Aorta (tissue), 5 donors: ENCODE measurements at regions of chr12 and their contacts with region 1.

Region 1: DNA sequence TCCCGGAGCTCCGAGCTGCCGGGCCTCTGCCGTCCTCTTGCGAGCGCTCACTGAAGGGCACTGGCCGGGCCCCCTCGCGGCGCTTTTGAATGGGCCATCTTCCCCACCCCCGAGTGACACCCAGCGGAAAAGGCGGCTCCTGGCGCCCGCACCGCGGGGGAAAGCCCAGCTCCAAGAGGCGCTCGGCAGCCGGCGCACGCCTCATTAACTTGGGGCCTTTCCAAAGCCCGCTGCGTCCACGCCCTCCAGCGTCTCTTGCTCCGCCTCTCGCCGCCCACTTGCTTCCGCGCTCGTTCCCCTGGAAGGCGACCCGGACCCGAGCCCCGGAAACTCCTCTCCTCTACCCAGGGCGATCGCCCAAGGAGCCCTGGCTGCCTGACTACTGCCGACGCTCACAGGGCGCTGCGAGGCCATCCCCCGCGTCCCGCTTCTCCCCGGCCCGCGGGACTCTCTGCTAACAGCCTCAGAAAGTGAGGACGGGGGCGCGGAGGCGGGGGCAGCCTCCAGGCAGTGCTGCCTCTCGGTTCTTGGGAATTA is at the start of gene PHLDA1:
- DNase-seq: peak; percentile 97 to 98
- ATAC-seq: peak; percentile 95
- H3K4me3 ChIP-seq: peak within 1 kb of the TSS; percentile 7 to 73
- H3K27ac ChIP-seq: peak within 1 kb of the TSS; percentile 55 to 87
- H3K4me1 ChIP-seq: no peaks in the 10 kb centered on the region
- H3K27me3 ChIP-seq: no peaks in the 10 kb centered on the region
- total RNA-seq, gene PHLDA1: 16.6 to 25.9 TPM

Region 2: DNA sequence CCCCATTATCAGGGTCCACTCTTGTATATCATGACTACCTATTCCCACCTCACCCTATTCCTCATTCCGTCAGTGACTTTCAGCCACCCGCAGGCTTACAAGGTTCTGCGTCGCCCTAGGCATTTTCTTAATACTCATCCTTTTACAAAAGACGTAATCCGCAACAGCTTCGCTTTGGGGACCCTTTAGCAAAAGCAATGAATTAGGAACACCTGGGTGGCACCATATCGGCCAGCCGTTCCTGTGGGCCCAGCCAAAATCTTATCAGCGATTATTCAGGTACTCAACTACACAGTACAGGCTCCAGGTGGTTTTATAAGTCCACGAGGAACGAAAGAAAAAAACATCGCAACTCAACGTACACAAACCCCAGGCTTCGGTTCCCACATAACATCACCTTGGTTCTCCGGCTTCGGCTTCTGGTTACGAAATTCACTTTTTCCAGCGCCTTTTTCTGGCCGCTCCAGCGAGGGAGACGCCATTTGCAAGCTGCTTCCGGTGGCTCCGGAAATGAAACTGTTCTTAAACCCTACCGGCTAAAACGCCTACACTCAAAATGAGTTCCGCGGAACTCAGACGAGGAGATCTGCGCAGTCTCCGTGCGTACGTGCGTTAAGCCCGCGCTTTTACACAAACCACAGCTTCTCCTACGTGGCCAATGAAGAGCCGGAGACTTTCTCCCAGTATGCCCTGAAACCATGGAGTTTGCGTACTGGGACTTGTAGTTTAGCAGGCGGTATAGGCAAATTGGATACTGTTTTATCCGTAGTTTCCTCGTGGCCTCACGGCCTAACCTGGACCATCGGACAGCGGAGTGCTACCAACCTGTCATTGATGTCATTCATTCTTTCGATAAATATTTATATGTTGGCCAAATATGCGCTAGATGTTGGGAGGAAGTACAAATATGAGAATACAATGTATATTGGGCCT is 520.2 kb before region 1 on chr12 and contains the start of gene KRR1:
- intact Hi-C with region 1: loop called in 1 of 2 experiments (anchors 5 kb)
- DNase-seq: peak; percentile 94 to 96
- ATAC-seq: peak; percentile 98
- H3K4me3 ChIP-seq: peak within 1 kb of the TSS; percentile 64 to 98
- H3K27ac ChIP-seq: peak within 1 kb of the TSS in 1 of 2 donors; percentile 70
- H3K4me1 ChIP-seq: no peaks in the 10 kb centered on the region
- H3K27me3 ChIP-seq: no peaks in the 10 kb centered on the region
- total RNA-seq, gene KRR1: 38.6 to 42.5 TPM

Region 3: DNA sequence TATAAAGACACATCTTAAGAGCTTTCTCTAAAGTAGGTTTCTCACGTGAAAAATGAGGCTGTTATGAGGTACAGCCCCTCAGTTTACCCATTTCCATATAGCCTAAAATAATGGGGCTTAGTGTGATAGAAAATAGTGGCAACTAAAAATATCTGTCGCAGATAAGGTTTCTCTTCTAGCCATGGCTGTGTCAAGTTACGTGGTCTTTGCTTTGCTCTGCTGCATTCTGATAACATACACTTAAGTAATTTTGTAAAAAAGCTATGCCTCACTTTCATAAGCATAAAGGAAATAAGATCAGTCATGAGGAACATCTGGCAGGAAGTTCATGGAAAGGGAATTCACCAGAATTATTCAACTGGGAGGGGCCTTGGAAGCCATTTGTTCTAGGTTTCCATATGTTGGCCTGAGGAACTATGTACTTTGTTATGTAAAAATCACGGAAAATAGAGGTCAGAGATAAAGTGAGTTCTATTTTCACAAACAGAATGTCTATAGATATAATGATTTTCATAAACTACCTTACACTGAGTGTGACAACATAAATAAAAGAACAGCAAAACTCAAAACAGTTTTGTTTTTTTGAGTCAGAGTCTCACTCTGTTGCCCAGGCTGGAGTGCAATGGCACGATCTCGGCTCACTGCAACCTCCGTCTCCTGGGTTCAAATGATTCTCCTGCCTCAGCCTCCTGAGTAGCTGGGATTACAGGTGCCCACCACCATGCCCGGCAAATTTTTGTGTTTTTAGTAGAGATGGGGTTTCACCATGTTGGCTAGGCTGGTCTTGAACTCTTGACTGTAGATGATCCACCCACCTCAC is 324.6 kb before region 1 on chr12:
- intact Hi-C with region 1: no loop called
- DNase-seq: no peak
- ATAC-seq: no peak
- H3K4me3 ChIP-seq: no peak overlapping the region
- H3K27ac ChIP-seq: no peak overlapping the region
- H3K4me1 ChIP-seq: no peaks in the 10 kb centered on the region
- H3K27me3 ChIP-seq: no peaks in the 10 kb centered on the region

Region 4: GRCh38 chr12:75759842-75760572 is 271.6 kb before region 1 on chr12:
- intact Hi-C with region 1: loop called in 1 of 2 experiments (anchors 10 kb)
- DNase-seq: no peak
- ATAC-seq: no peak
- H3K4me3 ChIP-seq: no peak overlapping the region
- H3K27ac ChIP-seq: no peak overlapping the region
- H3K4me1 ChIP-seq: peaks cover 0 to 5% of the 10 kb centered on the region in 2 donors
- H3K27me3 ChIP-seq: no peaks in the 10 kb centered on the region

Region 5: GRCh38 chr12:75805905-75806304 is 225.7 kb before region 1 on chr12:
- intact Hi-C with region 1: loop called in 1 of 2 experiments (anchors 2 kb)
- DNase-seq: no peak
- ATAC-seq: no peak
- H3K4me3 ChIP-seq: no peak overlapping the region
- H3K27ac ChIP-seq: peak overlapping the region in 1 of 2 donors; percentile 93
- H3K4me1 ChIP-seq: peaks cover 0 to 3% of the 10 kb centered on the region in 2 donors
- H3K27me3 ChIP-seq: no peaks in the 10 kb centered on the region

Region 6: DNA sequence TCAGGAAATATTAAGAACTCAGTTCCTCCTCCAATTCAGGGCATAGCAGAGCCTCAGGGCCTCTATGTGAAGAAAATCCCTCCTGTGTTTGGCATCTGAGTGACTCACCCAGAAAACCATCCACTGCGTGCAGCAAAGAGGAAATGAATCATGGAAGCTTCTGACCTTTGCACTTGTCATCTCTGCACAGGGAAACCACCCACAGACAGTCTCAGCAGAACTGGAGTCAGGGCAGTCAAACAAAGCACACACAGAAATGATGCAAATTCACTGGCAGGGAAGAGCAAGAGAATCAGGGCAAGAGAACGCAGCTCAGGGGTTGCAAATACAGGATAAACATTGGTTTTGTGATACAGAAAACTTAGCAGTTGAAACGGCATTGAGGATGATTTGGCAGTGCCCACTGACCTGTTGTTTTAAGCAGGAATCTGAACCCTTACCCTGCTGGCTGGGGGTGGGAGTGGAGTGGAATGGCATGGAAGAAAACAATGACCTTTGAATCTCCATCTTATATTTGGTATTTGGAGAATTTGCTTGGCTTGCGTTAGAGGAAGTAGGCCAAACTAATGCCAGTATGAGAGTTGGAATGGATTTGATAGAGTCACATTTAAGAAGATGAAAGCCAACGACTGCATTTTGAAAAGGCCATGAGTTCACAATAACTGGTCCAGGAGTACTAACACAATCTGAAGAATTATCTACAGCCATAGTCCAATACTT is 53.5 kb before region 1 on chr12:
- intact Hi-C with region 1: loop called (anchors 5 kb)
- DNase-seq: peak in 1 of 2 donors; percentile 82
- ATAC-seq: peak; percentile 94
- H3K4me3 ChIP-seq: no peak overlapping the region
- H3K27ac ChIP-seq: peak overlapping the region; percentile 90 to 92
- H3K4me1 ChIP-seq: peaks cover 7 to 10% of the 10 kb centered on the region in 2 donors
- H3K27me3 ChIP-seq: no peaks in the 10 kb centered on the region

Region 7: DNA sequence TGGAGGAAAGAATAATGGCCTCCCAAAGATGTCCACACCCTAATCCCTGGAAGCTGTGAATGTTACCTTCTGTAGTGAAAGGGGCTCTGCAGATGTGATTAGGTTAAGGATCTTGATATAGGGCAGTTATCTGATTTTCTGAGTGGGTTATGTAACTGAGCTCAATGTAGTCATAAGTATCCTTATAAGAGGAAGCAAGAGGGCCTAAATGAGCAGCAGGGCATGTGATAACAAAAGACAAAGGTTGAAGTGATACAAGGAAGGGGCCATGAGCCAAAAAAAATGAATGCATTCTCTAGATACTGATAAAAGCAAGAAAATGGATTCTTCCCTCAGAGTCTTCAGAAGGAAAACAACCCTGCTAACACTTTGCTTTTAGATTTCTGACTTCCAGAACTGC is 449.2 kb after region 1 on chr12:
- intact Hi-C with region 1: no loop called
- DNase-seq: no peak
- ATAC-seq: no peak
- H3K4me3 ChIP-seq: no peak overlapping the region
- H3K27ac ChIP-seq: no peak overlapping the region
- H3K4me1 ChIP-seq: no peaks in the 10 kb centered on the region
- H3K27me3 ChIP-seq: no peaks in the 10 kb centered on the region